WTC11 (cell line): ENCODE measurements at regions of chr5 and their contacts with region 1.

Region 1: GRCh38 chr5:140785905-140786686 is at the start of gene PCDHA1:
- DNase-seq: peak; percentile 24
- ATAC-seq: peak; percentile 69
- H3K4me3 Mint-ChIP-seq: peak within 1 kb of the TSS; percentile 58
- H3K27ac Mint-ChIP-seq: no peak within 1 kb of the TSS
- H3K4me1 Mint-ChIP-seq: peaks cover 5% of the 10 kb centered on the region; the same call in 1 of the 2 replicates
- H3K27me3 Mint-ChIP-seq: peaks cover 6% of the 10 kb centered on the region
- CTCF ChIP-seq: peak; percentile 49
- total RNA-seq, gene PCDHA1: 2.2 to 2.7 TPM (median 2.4 TPM) in 3 replicates

Region 2: DNA sequence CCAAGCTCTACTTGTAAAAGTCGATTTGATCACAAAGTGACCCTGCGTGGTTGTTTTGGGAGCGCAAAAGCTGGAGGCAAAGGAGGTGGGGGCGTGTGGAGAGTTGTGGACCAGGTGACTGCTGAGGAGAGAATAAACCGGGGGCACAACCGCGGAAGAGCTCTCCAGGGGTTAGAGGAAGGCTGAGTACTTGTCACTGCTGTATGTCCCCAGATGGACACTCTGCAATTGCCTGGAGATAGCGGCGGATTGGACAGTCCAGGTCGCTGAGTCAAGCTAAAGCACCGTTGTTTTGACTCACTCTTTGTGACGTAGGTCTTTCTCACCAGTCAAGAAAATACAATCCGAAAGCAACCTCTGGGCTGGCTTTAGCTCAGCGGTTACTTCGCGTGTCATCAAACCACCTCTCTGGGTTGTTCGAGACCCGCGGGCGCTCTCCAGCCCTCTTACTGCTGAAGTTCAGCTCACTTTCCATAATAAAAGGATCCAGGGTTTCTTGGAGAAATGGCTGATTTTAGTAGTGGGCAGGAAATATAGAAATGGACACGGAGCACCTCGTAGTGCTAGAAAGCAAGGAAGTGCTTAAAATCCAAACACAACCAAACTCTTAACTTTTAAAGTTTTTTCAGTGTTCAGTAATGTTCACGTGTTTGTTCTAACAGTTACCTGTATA is 60.2 kb before region 1 on chr5:
- CTCF ChIA-PET with region 1: interaction called, 10 read pairs
- POLR2A ChIA-PET with region 1: no interaction called
- DNase-seq: peak; percentile 80
- ATAC-seq: peak; percentile 95
- H3K4me3 Mint-ChIP-seq: peak overlapping the region; percentile 91
- H3K27ac Mint-ChIP-seq: no peak overlapping the region
- H3K4me1 Mint-ChIP-seq: peaks cover 4% of the 10 kb centered on the region; the same call in 1 of the 2 replicates
- H3K27me3 Mint-ChIP-seq: peaks cover 13% of the 10 kb centered on the region
- CTCF ChIP-seq: no peak

Region 3: GRCh38 chr5:140800816-140801493 is 14.9 kb after region 1 on chr5 and contains the start of gene PCDHA3:
- CTCF ChIA-PET with region 1: interaction called, 91 read pairs
- POLR2A ChIA-PET with region 1: no interaction called
- DNase-seq: no peak
- ATAC-seq: peak; percentile 46
- H3K4me3 Mint-ChIP-seq: peak within 1 kb of the TSS; percentile 76
- H3K27ac Mint-ChIP-seq: no peak within 1 kb of the TSS; the same call in 1 of the 2 replicates
- H3K4me1 Mint-ChIP-seq: peaks cover 1% of the 10 kb centered on the region; the same call in 1 of the 2 replicates
- H3K27me3 Mint-ChIP-seq: no peaks in the 10 kb centered on the region
- CTCF ChIP-seq: no peak
- total RNA-seq, gene PCDHA3: 3.3 to 3.4 TPM (median 3.3 TPM) in 3 replicates

Region 4: GRCh38 chr5:140821375-140822280 is 35.5 kb after region 1 on chr5 and contains the start of gene PCDHA5:
- CTCF ChIA-PET with region 1: interaction called, 15 read pairs
- POLR2A ChIA-PET with region 1: no interaction called
- DNase-seq: no peak
- ATAC-seq: no peak
- H3K4me3 Mint-ChIP-seq: peak within 1 kb of the TSS; percentile 30; the same call in 1 of the 2 replicates
- H3K27ac Mint-ChIP-seq: no peak within 1 kb of the TSS
- H3K4me1 Mint-ChIP-seq: no peaks in the 10 kb centered on the region
- H3K27me3 Mint-ChIP-seq: no peaks in the 10 kb centered on the region
- CTCF ChIP-seq: no peak
- total RNA-seq, gene PCDHA5: 0.85 to 0.94 TPM (median 0.90 TPM) in 3 replicates

Region 5: GRCh38 chr5:140855772-140856674 is 69.9 kb after region 1 on chr5 and contains the start of gene PCDHA10:
- CTCF ChIA-PET with region 1: interaction called, 29 read pairs
- POLR2A ChIA-PET with region 1: no interaction called
- DNase-seq: peak; percentile 48
- ATAC-seq: peak; percentile 84
- H3K4me3 Mint-ChIP-seq: peak within 1 kb of the TSS; percentile 92
- H3K27ac Mint-ChIP-seq: peak within 1 kb of the TSS; percentile 78
- H3K4me1 Mint-ChIP-seq: peaks cover 23% of the 10 kb centered on the region
- H3K27me3 Mint-ChIP-seq: no peaks in the 10 kb centered on the region
- CTCF ChIP-seq: peak; percentile 36
- total RNA-seq, gene PCDHA10: 10.8 to 12.0 TPM (median 11.6 TPM) in 3 replicates

Region 6: DNA sequence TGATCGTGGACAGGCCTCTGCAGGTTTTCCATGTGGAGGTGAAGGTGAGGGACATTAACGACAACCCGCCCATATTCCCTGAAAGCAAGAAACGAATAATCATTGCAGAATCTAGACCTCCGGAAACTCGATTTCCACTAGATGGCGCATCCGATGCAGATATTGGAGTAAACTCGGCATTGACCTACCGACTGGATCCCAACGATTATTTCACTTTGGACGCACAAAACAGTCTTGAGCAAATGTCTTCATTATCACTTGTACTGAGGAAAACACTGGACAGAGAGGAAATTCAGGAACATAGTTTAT is 96.4 kb after region 1 on chr5:
- CTCF ChIA-PET with region 1: no interaction called
- POLR2A ChIA-PET with region 1: no interaction called
- DNase-seq: peak; percentile 69
- ATAC-seq: peak; percentile 70
- H3K4me3 Mint-ChIP-seq: peak overlapping the region; percentile 83
- H3K27ac Mint-ChIP-seq: peak overlapping the region; percentile 58; the same call in 1 of the 2 replicates
- H3K4me1 Mint-ChIP-seq: peaks cover 16% of the 10 kb centered on the region; the same call in 1 of the 2 replicates
- H3K27me3 Mint-ChIP-seq: no peaks in the 10 kb centered on the region
- CTCF ChIP-seq: peak; percentile 21; the same call in 1 of the 2 replicates